ENCODE measurements at regions of chr7 and their contacts with region 1.

Region 1: DNA sequence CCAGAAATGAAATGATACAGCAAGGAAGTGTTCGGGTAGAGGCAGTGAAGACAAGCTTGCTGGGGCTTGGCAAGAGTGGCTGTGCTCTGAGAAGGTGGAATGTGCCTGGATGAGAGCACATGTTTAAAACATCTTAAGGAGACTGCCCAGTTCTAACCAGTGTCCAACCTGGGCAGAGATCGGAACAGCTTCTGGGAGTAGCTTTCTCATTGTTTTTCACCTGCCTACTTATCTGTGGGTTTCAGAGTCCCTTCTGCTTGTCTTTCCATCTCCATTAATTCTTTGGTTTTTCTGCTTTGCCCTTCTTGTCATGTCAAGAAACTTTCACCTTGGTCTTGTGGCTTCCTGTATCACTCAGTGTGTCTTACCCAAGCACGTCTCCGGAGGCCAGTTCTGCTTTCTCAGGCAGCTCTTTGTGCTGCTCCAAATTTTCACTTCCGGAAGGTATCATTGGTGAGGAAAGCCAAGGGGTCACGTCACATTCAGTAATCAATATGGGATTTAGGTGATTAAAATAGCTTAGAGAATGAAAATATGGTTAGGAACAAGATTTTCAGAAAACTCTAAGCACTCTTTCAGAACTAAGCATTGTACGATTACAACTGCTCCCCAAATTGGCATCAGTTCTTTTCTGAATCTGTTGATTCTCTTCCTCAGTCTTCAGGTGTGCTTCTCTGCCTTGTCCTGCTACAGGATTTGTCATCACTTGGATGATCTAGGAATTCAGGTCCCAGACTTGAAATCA is 5.5 kb upstream of the LAMB4 start:
- DNase-seq: peak; percentile 69
- ATAC-seq: peak; percentile 88
- H3K4me3 Mint-ChIP-seq: peak overlapping the region; percentile 15
- H3K27ac Mint-ChIP-seq: peak overlapping the region; percentile 79
- H3K4me1 Mint-ChIP-seq: peaks cover 19% of the 10 kb centered on the region
- H3K27me3 Mint-ChIP-seq: peaks cover 5% of the 10 kb centered on the region

Region 2: DNA sequence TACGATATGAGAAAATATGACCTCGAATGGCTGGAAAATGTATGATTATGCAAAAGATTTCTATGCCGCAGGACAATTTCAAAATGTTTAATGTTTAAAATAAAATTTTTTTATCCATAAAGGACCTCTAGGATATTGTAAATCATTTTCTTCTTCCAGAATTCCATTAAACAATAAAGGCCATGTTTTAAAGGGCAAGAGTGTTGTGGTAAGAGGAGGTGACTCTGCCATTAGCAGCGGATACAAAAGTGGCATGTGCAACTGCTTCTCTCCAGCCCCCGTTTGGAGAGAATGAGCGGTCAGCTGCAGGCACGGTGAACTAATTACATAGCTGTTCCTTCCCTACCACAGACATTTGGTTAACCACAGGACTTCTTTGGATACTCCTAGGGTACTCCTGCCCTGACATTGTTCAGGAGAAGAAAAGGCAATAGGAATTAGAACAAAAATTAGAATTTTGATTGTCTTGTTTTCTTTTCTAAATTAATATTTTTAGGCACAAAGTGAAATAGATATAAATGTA is 903.0 kb before region 1 on chr7:
- CTCF ChIA-PET with region 1: no interaction called
- POLR2A ChIA-PET with region 1: no interaction called
- intact Hi-C with region 1: no loop called
- DNase-seq: no peak
- ATAC-seq: no peak
- H3K4me3 Mint-ChIP-seq: no peak overlapping the region
- H3K27ac Mint-ChIP-seq: no peak overlapping the region
- H3K4me1 Mint-ChIP-seq: no peaks in the 10 kb centered on the region
- H3K27me3 Mint-ChIP-seq: no peaks in the 10 kb centered on the region

Region 3: DNA sequence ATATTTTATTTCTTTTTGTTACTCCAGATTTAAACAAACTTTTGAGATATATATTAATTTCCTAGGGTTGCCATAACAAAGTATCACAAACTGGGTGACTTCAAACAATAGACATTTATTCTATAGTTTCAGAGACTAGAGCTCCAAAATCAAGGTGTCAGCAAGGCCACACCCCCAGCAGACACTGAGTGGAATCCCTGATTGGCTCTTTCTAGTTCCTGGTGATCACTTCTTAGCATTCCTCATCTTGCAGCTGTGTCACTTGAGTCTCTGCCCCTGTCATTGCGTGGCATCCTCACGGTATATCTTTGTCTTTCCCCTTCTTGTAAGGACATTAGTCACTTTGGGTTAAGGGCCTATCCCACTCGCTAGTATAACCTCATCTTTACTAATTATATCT is 325.0 kb before region 1 on chr7:
- CTCF ChIA-PET with region 1: no interaction called
- POLR2A ChIA-PET with region 1: no interaction called
- intact Hi-C with region 1: loop called in 1 of 2 experiments (anchors 5 kb)
- DNase-seq: peak; percentile 21
- ATAC-seq: no peak
- H3K4me3 Mint-ChIP-seq: no peak overlapping the region
- H3K27ac Mint-ChIP-seq: no peak overlapping the region
- H3K4me1 Mint-ChIP-seq: peaks cover 27% of the 10 kb centered on the region
- H3K27me3 Mint-ChIP-seq: no peaks in the 10 kb centered on the region

Region 4: DNA sequence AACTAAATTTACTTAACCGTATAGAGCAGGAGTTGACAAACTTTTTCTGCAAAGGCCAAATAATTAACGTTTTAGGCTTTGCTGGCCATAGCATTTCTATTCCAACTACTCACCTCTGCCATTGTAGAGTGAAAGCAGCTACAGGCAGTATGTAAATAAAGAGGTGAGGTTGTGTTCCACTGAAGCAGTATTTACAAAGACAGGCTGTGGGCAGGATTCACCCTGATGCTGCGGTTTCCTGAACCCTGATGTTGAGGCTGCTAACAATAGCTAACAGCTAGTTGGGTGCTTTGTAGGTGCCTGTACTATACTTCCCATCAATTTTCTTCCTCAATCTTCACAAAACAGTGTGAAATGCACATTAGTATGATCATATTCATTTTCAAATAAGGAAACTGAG is 85.7 kb before region 1 on chr7:
- CTCF ChIA-PET with region 1: no interaction called
- POLR2A ChIA-PET with region 1: no interaction called
- intact Hi-C with region 1: no loop called
- DNase-seq: no peak
- ATAC-seq: no peak
- H3K4me3 Mint-ChIP-seq: no peak overlapping the region
- H3K27ac Mint-ChIP-seq: no peak overlapping the region
- H3K4me1 Mint-ChIP-seq: no peaks in the 10 kb centered on the region
- H3K27me3 Mint-ChIP-seq: no peaks in the 10 kb centered on the region